Mammary epithelial cell (primary cell): ENCODE measurements at regions of chr2 and their contacts with region 1.

Region 1: DNA sequence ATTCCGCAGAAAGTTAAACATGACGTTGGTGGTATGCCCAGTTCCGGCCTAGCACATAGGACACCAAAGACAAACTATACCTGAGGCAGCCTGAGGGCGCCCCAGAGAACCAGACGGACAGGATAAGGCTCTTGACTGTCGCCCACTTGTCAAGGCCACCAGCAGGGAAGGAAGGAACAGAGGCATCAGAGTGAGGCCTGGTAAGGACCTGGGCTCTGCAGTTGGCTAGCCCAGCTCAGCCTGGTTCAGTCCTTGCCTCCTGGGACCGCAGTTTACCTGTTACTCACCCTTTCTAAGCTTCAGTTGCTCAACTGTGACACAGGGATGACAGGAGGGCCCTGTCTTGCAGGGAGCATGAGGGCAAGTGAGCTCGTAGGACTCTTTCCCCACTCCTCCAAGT is 82.1 kb downstream of the ACTR2 start:
- DNase-seq: peak; percentile 22
- H3K4me3 ChIP-seq: no peak overlapping the region
- H3K27ac ChIP-seq: no peak overlapping the region
- H3K4me1 ChIP-seq: peaks cover 7% of the 10 kb centered on the region
- H3K27me3 ChIP-seq: no peaks in the 10 kb centered on the region
- CTCF ChIP-seq: peak in 1 of 2 donors; percentile 14

Region 2: DNA sequence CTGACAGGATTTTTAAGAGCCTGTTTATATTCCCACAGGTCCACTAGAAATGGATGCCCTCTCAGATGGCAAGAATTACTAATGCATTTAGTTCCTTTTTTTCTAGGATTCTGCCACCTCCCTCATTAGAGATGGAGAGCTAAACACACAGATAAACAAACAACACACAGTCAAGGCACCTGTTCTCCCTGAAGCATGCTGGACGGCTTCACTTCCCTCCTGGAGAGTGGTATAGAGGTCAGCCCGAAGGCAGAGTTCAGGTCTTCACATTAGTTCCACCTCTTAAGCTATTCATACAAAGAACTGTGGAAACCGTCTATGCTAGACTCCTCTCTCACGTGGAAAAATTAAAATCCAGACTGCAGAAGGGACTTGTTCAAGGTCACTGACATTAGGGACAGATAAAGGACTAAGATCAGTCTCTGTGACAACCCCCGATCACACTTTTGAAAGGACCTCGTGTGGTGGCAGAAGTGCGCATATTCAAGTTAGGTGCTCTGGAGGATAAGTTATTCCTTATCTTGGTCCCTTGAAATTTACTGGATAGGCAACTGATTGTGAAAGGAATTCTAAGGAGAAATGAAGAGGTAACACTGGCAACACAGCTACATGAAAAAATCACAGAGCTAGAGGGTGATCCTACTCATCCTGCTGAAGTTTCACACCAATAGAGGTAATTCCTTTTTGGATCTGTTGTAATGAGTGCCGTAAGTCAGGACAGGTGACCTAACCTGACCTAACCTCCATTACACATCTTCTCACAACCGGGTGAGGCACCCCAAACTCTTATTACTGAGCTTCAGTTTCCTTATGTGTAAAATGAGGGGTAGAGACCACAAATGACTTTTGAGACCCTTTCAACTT is 47.6 kb after region 1 on chr2:
- CTCF ChIA-PET with region 1: no interaction called
- dilution Hi-C with region 1: loop called (anchors 5 kb)
- in situ Hi-C with region 1: no loop called
- intact Hi-C with region 1: no loop called
- DNase-seq: no peak
- H3K4me3 ChIP-seq: no peak overlapping the region
- H3K27ac ChIP-seq: no peak overlapping the region
- H3K4me1 ChIP-seq: peaks cover 49% of the 10 kb centered on the region
- H3K27me3 ChIP-seq: no peaks in the 10 kb centered on the region
- CTCF ChIP-seq: no peak

Region 3: DNA sequence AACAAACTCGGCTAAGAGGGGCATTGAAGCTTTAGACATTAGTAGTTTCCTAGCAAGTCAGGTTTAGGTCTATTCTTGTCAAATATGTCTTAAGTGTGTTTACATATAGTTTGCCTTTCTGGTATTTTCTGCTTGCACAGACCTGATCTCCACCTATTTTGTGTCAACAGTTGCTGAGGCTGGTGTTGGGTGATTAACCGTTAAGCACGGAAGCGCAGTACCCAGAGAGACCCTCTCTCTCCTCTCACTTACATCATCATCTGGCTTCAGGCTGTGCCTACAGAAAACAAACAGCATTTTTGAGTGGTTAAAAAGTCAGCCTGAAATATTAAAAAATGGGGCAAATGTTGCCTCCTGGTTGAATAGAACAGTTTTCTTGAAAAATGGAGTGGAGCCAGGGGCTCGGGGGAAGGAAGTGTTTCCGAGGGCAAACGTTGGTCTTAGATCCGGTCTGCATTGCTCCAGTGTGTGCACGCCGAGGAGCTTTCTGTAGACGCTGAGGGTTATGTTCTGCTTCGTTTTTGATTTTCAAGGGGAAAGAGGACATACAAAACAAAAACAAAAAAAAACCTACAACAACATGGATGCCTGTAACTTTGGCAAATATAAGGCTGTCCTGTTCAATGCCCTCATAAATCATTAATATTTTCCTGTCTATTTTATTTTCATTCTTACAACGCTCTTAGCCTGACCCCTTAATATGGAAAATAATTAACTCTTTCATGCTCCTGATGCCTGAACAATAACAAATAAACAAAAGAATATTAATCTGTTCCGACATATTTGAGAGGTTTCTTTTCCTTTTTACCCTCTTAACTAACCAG is 1246.0 kb after region 1 on chr2:
- CTCF ChIA-PET with region 1: no interaction called
- dilution Hi-C with region 1: no loop called
- in situ Hi-C with region 1: no loop called
- intact Hi-C with region 1: no loop called
- DNase-seq: no peak
- H3K4me3 ChIP-seq: no peak overlapping the region
- H3K27ac ChIP-seq: no peak overlapping the region
- H3K4me1 ChIP-seq: no peaks in the 10 kb centered on the region
- H3K27me3 ChIP-seq: no peaks in the 10 kb centered on the region
- CTCF ChIP-seq: no peak